Mucosa of descending colon (tissue), 3 donors: ENCODE measurements at regions of chr12 and their contacts with region 1.

Region 1: GRCh38 chr12:1795785-1796514 is 24.4 kb upstream of the LRTM2 start:
- DNase-seq: peak; percentile 94 to 98 (median 97)
- ATAC-seq: peak; percentile 93
- H3K4me3 ChIP-seq: peak overlapping the region; percentile 60
- H3K4me1 ChIP-seq: peaks cover 9% of the 10 kb centered on the region
- CTCF ChIP-seq: peak; percentile 96

Region 2: DNA sequence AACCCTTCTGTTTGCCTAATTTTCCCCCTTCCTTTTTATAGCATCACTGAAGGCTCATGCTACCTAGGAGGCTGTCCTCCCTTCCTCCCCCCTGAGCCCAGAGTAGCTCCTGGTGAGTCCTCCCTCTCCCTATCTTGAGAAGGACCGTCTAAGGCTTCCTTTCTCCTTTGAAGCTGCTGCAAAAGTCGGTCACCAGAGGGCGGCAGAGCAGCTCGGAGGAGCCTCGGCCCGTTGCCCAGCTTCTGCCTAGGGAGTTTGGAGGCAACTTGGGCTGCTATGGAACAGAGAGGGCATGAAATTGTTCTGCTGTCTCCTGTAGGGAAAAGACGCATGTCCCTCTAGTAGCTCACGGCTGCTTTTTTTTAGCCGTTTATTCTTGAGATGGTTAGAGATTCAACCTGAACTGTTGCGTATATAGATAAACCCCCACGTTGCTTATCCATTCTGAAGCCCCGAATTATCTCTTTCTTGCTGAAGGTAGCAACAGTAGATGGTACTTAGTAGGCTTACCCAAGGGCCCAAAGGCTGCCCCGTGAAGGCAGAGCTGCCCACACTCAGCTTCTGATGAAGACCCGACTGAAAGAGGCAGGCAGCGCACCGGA is 161.3 kb before region 1 on chr12:
- intact Hi-C with region 1: loop called in 1 of 2 experiments (anchors 5 kb)
- DNase-seq: peak; percentile 77 to 86 (median 85)
- ATAC-seq: peak; percentile 78
- H3K4me3 ChIP-seq: no peak overlapping the region
- H3K4me1 ChIP-seq: peaks cover 11% of the 10 kb centered on the region
- CTCF ChIP-seq: peak; percentile 58

Region 3: DNA sequence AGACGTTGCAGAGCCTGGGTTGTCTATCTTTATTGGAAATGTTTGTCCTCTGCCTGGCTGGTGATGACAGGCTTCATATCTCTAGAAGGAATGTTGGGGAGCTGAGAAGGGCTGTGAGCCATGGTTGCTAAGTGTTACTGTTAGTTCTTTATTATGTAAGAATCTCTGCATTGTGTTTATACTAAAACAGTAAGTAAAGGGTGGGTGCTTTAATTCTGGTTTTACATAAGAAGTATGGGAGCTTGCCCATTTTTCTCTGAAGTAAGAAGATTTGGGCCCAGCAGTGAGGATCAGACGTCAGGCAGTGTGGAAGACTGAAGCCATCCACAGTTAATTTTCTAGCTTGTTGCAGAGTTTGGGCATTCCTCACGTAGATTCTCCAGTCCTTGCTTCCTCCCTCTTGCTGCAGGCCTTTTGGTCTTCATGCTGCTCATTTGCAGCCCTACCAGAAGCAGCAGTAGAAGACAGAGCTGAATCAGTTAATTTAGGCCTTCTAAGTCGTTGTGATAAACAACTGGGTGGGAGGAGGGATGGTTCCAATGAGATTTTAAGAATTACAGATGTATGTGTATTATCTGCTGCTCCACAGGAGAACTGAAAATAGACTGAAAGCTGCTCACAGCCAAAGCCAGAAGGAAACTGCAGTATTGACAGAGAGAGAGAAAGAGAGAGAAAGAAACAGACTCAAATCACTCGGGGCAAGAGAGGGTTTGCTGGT is 145.5 kb before region 1 on chr12:
- intact Hi-C with region 1: loop called (anchors 1 to 5 kb)
- DNase-seq: no peak
- ATAC-seq: no peak
- H3K4me3 ChIP-seq: no peak overlapping the region
- H3K4me1 ChIP-seq: no peaks in the 10 kb centered on the region
- CTCF ChIP-seq: no peak

Region 4: GRCh38 chr12:1939801-1940607 is 144.1 kb after region 1 on chr12:
- intact Hi-C with region 1: loop called (anchors 5 kb)
- DNase-seq: peak; percentile 87 to 96 (median 94)
- ATAC-seq: peak; percentile 76
- H3K4me3 ChIP-seq: no peak overlapping the region
- H3K4me1 ChIP-seq: peaks cover 27% of the 10 kb centered on the region
- CTCF ChIP-seq: peak; percentile 81

Region 5: GRCh38 chr12:2034633-2035430 is 238.9 kb after region 1 on chr12:
- intact Hi-C with region 1: loop called (anchors 10 kb)
- DNase-seq: peak; percentile 87 to 95 (median 92)
- ATAC-seq: peak; percentile 99
- H3K4me3 ChIP-seq: no peak overlapping the region
- H3K4me1 ChIP-seq: peaks cover 7% of the 10 kb centered on the region
- CTCF ChIP-seq: peak; percentile 96

Region 6: DNA sequence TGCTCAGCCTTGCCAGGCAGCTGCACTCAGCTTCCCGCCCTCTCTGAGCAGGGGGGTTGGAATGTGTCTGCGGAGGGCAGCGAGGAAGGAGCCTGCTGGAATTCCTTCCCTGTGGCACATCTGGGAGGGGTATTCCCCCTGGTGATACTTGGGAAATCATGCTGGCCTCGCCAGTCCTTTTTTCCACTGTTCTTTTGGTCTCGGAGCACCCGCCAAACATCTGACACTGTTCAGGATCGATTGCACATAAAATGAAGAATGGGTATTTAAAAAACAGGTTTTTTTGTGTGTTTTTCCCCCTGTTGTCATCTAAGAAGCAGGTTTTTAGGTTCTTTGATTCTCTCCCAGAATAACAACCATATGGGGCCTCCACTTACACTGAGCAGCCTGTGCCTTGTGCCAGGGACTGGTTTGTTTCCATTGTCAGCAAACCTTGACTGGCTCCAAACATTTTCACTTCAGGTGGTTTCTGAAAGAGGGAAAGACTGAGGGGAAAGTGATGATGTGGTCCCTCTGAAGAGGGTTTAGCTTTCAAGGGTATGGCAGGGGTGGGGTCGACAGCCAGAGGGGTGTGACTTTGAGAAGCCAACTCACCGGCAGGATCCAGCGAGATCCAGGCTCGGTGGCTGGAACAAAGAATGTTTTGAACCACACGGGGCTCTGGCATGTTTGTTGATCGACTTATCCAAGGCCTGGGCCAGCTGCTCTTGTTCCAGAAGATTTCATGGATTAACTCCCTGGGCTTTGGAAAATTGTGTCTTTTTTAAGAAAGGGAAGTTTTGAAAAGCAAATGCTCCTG is 472.0 kb after region 1 on chr12:
- intact Hi-C with region 1: no loop called
- DNase-seq: peak in 1 of 3 donors; percentile 47
- ATAC-seq: no peak
- H3K4me3 ChIP-seq: no peak overlapping the region
- H3K4me1 ChIP-seq: peaks cover 12% of the 10 kb centered on the region
- CTCF ChIP-seq: no peak